ENCODE measurements at regions of chr11 and their contacts with region 1.

Region 1: GRCh38 chr11:61332797-61333549 is at the starts of genes DDB1 and TKFC:
- DNase-seq: peak; percentile 96 to 97
- H3K4me3 ChIP-seq: peak within 1 kb of the TSS; percentile 93 to 99 (median 95)
- H3K27ac ChIP-seq: peak within 1 kb of the TSS; percentile 66 to 87 (median 79)
- H3K4me1 ChIP-seq: peaks cover 18 to 32% of the 10 kb centered on the region in 2 donors
- H3K27me3 ChIP-seq: no peaks in the 10 kb centered on the region
- CTCF ChIP-seq: no peak
- POLR2A ChIP-seq: peak in 1 of 2 donors; percentile 92
- total RNA-seq, gene DDB1: 132 to 211 (median 182) TPM
- total RNA-seq, gene TKFC: 27.0 to 62.8 (median 43.6) TPM

Region 2: DNA sequence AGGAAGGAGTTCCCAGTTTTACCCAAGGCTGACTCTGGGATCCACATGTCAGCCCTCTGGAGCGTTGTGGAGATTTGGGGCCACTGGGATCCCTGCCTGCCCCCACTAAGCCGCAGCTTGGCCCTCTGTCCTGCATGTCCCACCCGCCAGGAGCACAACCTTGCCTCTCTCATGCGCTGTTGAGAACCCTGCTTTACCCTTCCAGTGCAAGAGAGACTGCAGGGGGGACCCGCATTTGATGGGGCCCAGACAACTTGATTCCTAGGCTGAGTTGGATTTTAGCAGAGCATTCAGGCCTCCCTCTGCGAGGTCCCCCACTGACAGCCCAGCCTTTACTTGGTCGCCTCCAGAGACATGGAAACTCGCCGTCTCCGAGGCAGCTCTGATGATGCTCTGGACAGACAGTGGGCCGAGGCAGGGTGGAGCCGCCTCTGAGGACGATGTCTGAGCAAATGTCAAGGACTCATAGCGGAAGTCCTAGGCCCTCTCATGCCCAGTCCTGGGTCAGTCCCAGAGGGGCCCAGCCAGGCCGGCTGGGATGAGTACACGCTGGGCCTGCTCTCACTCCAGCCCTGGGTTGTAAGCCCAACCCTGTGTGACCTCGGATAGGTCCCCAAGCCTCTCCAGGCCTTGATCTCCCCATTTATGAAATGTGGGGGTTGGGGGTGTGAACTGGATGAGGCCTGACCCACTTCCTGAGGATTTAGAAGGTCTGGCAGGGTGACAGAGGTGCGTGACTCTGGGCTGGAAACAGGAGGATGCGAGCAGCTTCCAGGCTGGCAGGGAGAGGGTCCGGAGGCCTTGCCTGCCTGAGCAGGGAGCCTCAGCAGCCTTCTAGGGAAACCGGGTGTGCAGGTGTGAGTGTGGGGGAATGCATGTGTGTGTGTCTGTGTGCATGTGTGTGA is 230.1 kb before region 1 on chr11:
- intact Hi-C with region 1: no loop called
- DNase-seq: no peak
- H3K4me3 ChIP-seq: no peak overlapping the region
- H3K27ac ChIP-seq: no peak overlapping the region
- H3K4me1 ChIP-seq: no peaks in the 10 kb centered on the region
- H3K27me3 ChIP-seq: no peaks in the 10 kb centered on the region
- CTCF ChIP-seq: no peak
- POLR2A ChIP-seq: no peak

Region 3: GRCh38 chr11:61254403-61255025 is 78.5 kb before region 1 on chr11:
- intact Hi-C with region 1: loop called (anchors 10 kb)
- DNase-seq: peak; percentile 56 to 61
- H3K4me3 ChIP-seq: no peak overlapping the region
- H3K27ac ChIP-seq: no peak overlapping the region
- H3K4me1 ChIP-seq: peaks cover 16 to 30% of the 10 kb centered on the region in 2 donors
- H3K27me3 ChIP-seq: no peaks in the 10 kb centered on the region
- CTCF ChIP-seq: peak in 5 of 6 experiments; percentile 68 to 89 (median 79)
- POLR2A ChIP-seq: no peak

Region 4: DNA sequence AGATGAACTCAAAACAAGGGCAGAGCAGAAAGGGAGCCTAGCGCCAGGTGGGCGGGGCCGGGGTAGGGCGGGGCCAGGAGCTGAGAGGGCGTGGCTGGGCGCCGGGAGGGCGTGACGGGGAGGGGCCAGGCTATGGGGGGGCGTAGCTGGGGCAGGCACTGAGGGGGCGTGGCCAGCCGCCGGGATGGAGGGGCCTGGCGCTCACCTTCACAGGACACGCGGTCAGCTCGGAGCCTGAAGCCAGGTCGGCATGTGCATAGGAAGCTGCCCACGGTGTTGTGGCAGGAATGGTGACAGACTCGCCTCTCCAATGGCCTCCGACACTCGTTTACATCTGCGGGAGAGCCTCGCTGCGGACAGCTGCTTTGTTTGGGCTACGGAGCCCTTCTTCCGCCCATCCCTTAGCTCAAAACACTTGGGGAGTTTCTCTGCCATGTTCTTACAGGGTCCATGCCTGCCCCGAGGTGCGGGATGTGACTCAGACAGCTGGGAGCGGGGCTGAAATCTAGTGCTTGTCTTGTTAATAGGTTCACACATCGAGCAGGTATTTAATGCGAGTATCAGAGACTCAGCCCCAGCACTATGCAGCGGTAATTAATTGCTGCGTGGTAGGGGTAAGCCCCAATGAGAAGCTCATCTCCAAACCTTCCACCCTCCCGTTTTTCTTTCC is 51.3 kb before region 1 on chr11:
- intact Hi-C with region 1: no loop called
- DNase-seq: peak; percentile 10 to 29
- H3K4me3 ChIP-seq: no peak overlapping the region
- H3K27ac ChIP-seq: no peak overlapping the region
- H3K4me1 ChIP-seq: peaks cover 0 to 4% of the 10 kb centered on the region in 2 donors
- H3K27me3 ChIP-seq: no peaks in the 10 kb centered on the region
- CTCF ChIP-seq: no peak
- POLR2A ChIP-seq: no peak

Region 5: DNA sequence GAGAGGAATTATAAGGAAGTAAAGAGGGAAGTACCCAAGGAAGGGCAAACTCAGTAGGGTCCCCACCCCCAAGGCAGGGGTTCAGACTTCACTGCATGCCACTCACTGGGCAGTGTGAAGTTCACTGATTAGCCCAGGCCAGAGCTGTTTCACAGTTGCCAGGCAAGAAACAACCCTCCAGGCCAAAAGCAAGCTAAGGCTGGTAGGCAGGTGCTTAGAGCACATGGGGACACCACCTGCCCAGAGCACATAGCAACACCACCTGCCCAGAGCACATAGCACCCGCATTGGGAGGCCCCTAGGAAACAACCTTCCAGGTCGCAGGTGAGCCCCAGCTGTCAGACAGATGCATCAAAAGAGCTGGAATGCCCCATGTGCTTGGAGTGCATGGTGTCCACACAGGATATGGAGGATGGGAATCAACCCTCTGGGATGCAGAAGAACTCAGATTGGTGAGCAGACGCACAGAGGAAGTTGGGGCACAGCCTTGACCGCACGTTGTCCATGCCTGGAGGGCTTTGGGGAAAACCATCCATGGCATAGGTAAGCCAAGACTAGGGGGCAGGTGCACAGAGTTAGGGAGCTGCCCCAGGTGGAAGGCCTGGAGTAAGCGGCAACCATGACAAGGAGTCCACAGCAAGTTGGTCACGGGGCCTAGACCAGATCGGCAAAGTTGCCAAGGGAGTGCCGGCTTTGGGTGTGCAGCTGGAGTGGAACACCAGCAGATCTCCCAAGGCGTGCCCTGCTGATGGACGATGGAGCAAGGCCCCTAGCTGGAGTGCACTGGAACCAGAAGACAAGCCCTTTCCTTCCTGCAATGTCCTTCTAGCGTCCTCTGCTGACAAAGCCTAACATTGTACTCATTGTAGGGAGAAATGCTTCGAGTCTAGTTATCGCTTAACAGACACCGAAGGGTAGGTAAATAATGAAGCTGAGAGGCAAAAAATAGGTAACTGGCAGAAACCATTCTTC is 51.6 kb after region 1 on chr11:
- intact Hi-C with region 1: loop called (anchors 2 kb)
- DNase-seq: no peak
- H3K4me3 ChIP-seq: no peak overlapping the region
- H3K27ac ChIP-seq: no peak overlapping the region
- H3K4me1 ChIP-seq: no peaks in the 10 kb centered on the region
- H3K27me3 ChIP-seq: no peaks in the 10 kb centered on the region
- CTCF ChIP-seq: no peak
- POLR2A ChIP-seq: no peak

Region 6: GRCh38 chr11:61417670-61418069 is 84.7 kb after region 1 on chr11:
- intact Hi-C with region 1: no loop called
- DNase-seq: no peak
- H3K4me3 ChIP-seq: no peak overlapping the region
- H3K27ac ChIP-seq: no peak overlapping the region
- H3K4me1 ChIP-seq: no peaks in the 10 kb centered on the region
- H3K27me3 ChIP-seq: no peaks in the 10 kb centered on the region
- CTCF ChIP-seq: no peak
- POLR2A ChIP-seq: no peak